ENCODE measurements at regions of chr1 and their contacts with region 1.

Region 1: GRCh38 chr1:26391450-26391849 is 18.9 kb upstream of the ZNF683 start:
- DNase-seq: peak; percentile 52 to 63 (median 56)
- H3K4me3 ChIP-seq: no peak overlapping the region
- H3K4me3 Mint-ChIP-seq: peak overlapping the region in 2 of 8 donors; percentile 1 to 43
- H3K27ac ChIP-seq: no peak overlapping the region
- H3K27ac Mint-ChIP-seq: peak overlapping the region in 3 of 7 donors; percentile 51 to 75 (median 59)
- H3K4me1 ChIP-seq: peaks cover 42% of the 10 kb centered on the region
- H3K4me1 Mint-ChIP-seq: peaks cover 24 to 40% (median 28%) of the 10 kb centered on the region in 4 donors
- H3K27me3 ChIP-seq: no peaks in the 10 kb centered on the region
- H3K27me3 Mint-ChIP-seq: no peaks in the 10 kb centered on the region

Region 2: GRCh38 chr1:26029471-26030135 is 361.8 kb before region 1 on chr1:
- CTCF ChIA-PET with region 1: no interaction called
- POLR2A ChIA-PET with region 1: no interaction called
- intact Hi-C with region 1: no loop called
- DNase-seq: no peak
- H3K4me3 ChIP-seq: no peak overlapping the region
- H3K4me3 Mint-ChIP-seq: no peak overlapping the region
- H3K27ac ChIP-seq: no peak overlapping the region
- H3K27ac Mint-ChIP-seq: no peak overlapping the region
- H3K4me1 ChIP-seq: peaks cover 3% of the 10 kb centered on the region
- H3K4me1 Mint-ChIP-seq: peaks cover 1 to 4% (median 3%) of the 10 kb centered on the region in 4 donors
- H3K27me3 ChIP-seq: no peaks in the 10 kb centered on the region
- H3K27me3 Mint-ChIP-seq: peaks cover 1 to 2% of the 10 kb centered on the region in 2 donors

Region 3: GRCh38 chr1:26169669-26170471 is 221.6 kb before region 1 on chr1 and contains the start of gene ZNF593:
- CTCF ChIA-PET with region 1: interaction called, 14 read pairs
- POLR2A ChIA-PET with region 1: no interaction called
- intact Hi-C with region 1: loop called (anchors 5 kb)
- DNase-seq: peak; percentile 74 to 81 (median 77)
- H3K4me3 ChIP-seq: peak within 1 kb of the TSS; percentile 52 to 90
- H3K4me3 Mint-ChIP-seq: peak within 1 kb of the TSS; percentile 83 to 91 (median 88)
- H3K27ac ChIP-seq: peak within 1 kb of the TSS; percentile 85
- H3K27ac Mint-ChIP-seq: peak within 1 kb of the TSS; percentile 71 to 94 (median 93)
- H3K4me1 ChIP-seq: peaks cover 20% of the 10 kb centered on the region
- H3K4me1 Mint-ChIP-seq: peaks cover 4 to 25% (median 16%) of the 10 kb centered on the region in 4 donors
- H3K27me3 ChIP-seq: no peaks in the 10 kb centered on the region
- H3K27me3 Mint-ChIP-seq: no peaks in the 10 kb centered on the region
- total RNA-seq, gene ZNF593: 10.7 to 12.4 TPM

Region 4: GRCh38 chr1:26279456-26280332 is 111.8 kb before region 1 on chr1 and contains the start of gene SH3BGRL3:
- CTCF ChIA-PET with region 1: interaction called, 63 read pairs
- POLR2A ChIA-PET with region 1: interaction called, 29 read pairs
- intact Hi-C with region 1: loop called (anchors 1 kb)
- DNase-seq: peak; percentile 83 to 88 (median 86)
- H3K4me3 ChIP-seq: peak within 1 kb of the TSS; percentile 50 to 92
- H3K4me3 Mint-ChIP-seq: peak within 1 kb of the TSS; percentile 85 to 96 (median 90)
- H3K27ac ChIP-seq: peak within 1 kb of the TSS; percentile 82
- H3K27ac Mint-ChIP-seq: peak within 1 kb of the TSS; percentile 94 to 98 (median 97)
- H3K4me1 ChIP-seq: peaks cover 88% of the 10 kb centered on the region
- H3K4me1 Mint-ChIP-seq: peaks cover 58 to 90% (median 76%) of the 10 kb centered on the region in 4 donors
- H3K27me3 ChIP-seq: no peaks in the 10 kb centered on the region
- H3K27me3 Mint-ChIP-seq: no peaks in the 10 kb centered on the region
- total RNA-seq, gene SH3BGRL3: 293 to 305 TPM

Region 5: GRCh38 chr1:26284597-26285360 is 106.7 kb before region 1 on chr1:
- CTCF ChIA-PET with region 1: interaction called, 63 read pairs
- POLR2A ChIA-PET with region 1: interaction called, 29 read pairs
- intact Hi-C with region 1: loop called (anchors 2 kb)
- DNase-seq: peak; percentile 91 to 99 (median 92)
- H3K4me3 ChIP-seq: peak overlapping the region; percentile 38 to 50
- H3K4me3 Mint-ChIP-seq: peak overlapping the region; percentile 82 to 94 (median 89)
- H3K27ac ChIP-seq: peak overlapping the region; percentile 91
- H3K27ac Mint-ChIP-seq: peak overlapping the region; percentile 94 to 100 (median 99)
- H3K4me1 ChIP-seq: peaks cover 95% of the 10 kb centered on the region
- H3K4me1 Mint-ChIP-seq: peaks cover 63 to 96% (median 81%) of the 10 kb centered on the region in 4 donors
- H3K27me3 ChIP-seq: no peaks in the 10 kb centered on the region
- H3K27me3 Mint-ChIP-seq: no peaks in the 10 kb centered on the region

Region 6: DNA sequence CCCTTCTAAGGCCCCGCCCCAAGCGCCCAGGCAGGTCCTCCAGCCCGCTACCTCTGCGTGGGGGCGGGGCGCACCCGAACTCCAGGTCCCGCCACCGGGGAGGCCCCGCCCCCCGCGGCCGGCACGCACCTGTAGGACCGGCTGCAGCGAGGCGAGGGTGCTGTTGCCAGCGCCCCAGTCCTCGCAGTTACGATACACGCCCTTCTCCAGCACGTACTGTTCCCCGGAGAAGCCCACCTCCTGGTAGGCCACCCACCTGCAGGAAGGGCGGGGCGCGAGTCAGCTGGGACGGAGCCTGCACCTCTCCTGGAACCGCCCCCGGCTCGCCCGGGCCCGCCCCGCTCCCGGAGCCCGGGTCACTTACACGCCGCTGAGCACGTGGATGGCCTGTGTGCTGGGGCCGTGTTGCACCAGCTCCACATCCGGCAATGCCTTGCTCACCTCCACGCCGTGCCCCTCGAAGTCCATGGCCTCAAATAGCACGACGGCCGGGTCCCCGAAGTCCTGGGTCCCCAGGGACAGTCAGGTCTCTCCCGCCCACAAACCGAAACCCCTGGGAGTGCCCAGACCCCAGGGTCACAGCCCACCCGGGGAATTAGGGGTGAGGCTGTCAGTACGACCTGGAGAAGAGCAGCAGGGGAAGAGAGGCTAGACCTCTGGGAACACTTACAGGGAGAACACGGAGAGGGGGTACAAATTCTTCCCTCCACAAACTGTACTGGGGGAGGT is 54.8 kb before region 1 on chr1:
- CTCF ChIA-PET with region 1: interaction called, 3 read pairs
- POLR2A ChIA-PET with region 1: interaction called, 5 read pairs
- intact Hi-C with region 1: loop called (anchors 1 kb)
- DNase-seq: peak; percentile 79 to 88 (median 82)
- H3K4me3 ChIP-seq: peak overlapping the region; percentile 61 to 73
- H3K4me3 Mint-ChIP-seq: peak overlapping the region; percentile 89 to 95 (median 92)
- H3K27ac ChIP-seq: peak overlapping the region; percentile 49
- H3K27ac Mint-ChIP-seq: peak overlapping the region in 6 of 7 donors; percentile 12 to 75 (median 62)
- H3K4me1 ChIP-seq: peaks cover 19% of the 10 kb centered on the region
- H3K4me1 Mint-ChIP-seq: peaks cover 0 to 33% (median 9%) of the 10 kb centered on the region in 4 donors
- H3K27me3 ChIP-seq: no peaks in the 10 kb centered on the region
- H3K27me3 Mint-ChIP-seq: no peaks in the 10 kb centered on the region

Region 7: GRCh38 chr1:26358411-26359384 is 32.8 kb before region 1 on chr1:
- CTCF ChIA-PET with region 1: interaction called, 121 read pairs
- POLR2A ChIA-PET with region 1: interaction called, 15 read pairs
- intact Hi-C with region 1: loop called (anchors 1 kb)
- DNase-seq: peak; percentile 79 to 95 (median 81)
- H3K4me3 ChIP-seq: peak overlapping the region in 1 of 2 donors; percentile 44
- H3K4me3 Mint-ChIP-seq: peak overlapping the region; percentile 58 to 88 (median 74)
- H3K27ac ChIP-seq: peak overlapping the region; percentile 40
- H3K27ac Mint-ChIP-seq: peak overlapping the region; percentile 79 to 97 (median 94)
- H3K4me1 ChIP-seq: peaks cover 56% of the 10 kb centered on the region
- H3K4me1 Mint-ChIP-seq: peaks cover 27 to 70% (median 41%) of the 10 kb centered on the region in 4 donors
- H3K27me3 ChIP-seq: no peaks in the 10 kb centered on the region
- H3K27me3 Mint-ChIP-seq: no peaks in the 10 kb centered on the region

Region 8: DNA sequence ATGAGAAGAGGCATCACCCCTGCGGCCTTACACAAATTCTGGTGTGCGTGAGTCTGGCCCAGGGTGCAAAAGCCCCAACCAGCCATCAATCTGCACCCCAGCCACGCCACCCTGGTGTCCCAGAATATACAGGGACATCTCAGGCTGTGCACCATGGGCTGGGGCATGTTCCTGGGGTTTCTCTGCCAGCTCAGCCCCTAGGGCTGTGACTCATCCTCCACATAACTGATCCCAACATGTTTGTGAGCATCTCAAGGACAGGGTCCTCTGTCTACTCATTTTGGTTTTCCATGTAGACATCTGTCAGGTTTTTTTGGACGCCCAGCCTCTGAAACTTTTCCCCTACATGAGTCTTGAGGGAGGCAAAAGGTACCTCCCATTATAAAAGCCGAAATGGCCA is 19.4 kb before region 1 on chr1:
- CTCF ChIA-PET with region 1: interaction called, 73 read pairs
- POLR2A ChIA-PET with region 1: interaction called, 54 read pairs
- intact Hi-C with region 1: loop called (anchors 1 kb)
- DNase-seq: no peak
- H3K4me3 ChIP-seq: peak overlapping the region in 1 of 2 donors; percentile 18
- H3K4me3 Mint-ChIP-seq: peak overlapping the region in 7 of 8 donors; percentile 8 to 81 (median 61)
- H3K27ac ChIP-seq: no peak overlapping the region
- H3K27ac Mint-ChIP-seq: peak overlapping the region; percentile 75 to 96 (median 86)
- H3K4me1 ChIP-seq: peaks cover 94% of the 10 kb centered on the region
- H3K4me1 Mint-ChIP-seq: peaks cover 60 to 86% (median 73%) of the 10 kb centered on the region in 4 donors
- H3K27me3 ChIP-seq: no peaks in the 10 kb centered on the region
- H3K27me3 Mint-ChIP-seq: no peaks in the 10 kb centered on the region

Measured in CD4-positive, alpha-beta memory T cell (primary cell).